ENCODE measurements at regions of chr2 and their contacts with region 1.

Region 1: DNA sequence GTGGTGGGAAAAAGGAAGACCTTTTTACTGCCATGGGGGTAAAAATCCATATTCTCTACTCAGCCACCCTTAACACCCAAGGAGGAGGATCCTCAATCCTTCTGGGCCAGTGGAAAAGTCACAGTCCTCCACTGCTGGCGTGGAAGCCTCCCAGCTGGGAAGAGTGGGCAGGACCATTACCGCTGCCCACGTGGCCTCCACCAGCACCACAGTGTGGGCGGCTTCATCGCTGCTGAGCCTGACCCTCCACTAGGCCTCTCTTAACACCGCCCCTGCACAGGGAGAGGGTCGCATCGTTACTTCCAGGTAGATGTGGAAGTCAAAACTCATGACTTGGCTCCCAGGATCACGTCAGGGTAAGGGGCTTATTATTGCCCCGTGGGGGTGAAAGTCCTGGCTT is 656.5 kb downstream of the SUCLG1 start:
- DNase-seq: no peak
- ATAC-seq: no peak

Region 2: DNA sequence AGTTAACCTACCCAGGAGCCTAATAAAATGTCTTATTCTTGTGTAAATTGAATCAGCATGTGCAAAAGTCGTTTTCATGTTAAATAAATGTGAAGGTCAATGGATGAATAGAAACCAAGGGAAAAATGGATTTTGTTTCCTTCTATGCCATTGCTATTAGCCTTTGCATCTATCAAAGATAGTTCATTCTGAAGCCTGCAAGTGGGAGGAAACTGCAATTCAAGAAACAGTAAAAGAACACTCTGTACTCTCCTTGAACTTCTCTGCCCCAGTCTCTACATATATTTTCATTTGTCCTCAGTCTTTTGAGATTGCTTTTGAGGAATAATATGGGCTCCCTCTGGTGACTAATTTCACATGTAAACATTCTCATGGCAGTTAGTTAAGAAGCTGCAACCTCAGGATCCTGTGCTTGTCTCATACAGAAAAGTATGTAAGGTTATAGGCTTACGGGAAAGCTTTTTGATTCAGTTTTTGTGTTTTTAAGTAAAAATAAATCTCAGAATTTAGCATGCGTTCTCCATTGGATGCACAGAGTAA is 1908.1 kb before region 1 on chr2:
- intact Hi-C with region 1: loop called (anchors 10 kb)
- DNase-seq: no peak
- ATAC-seq: no peak